Posterior vena cava (tissue), 2 donors: ENCODE measurements at regions of chr2 and their contacts with region 1.

Region 1: GRCh38 chr2:207769597-207770486 is at the start of gene FZD5:
- DNase-seq: peak; percentile 98
- total RNA-seq, gene FZD5: 3.4 to 3.7 TPM

Region 2: DNA sequence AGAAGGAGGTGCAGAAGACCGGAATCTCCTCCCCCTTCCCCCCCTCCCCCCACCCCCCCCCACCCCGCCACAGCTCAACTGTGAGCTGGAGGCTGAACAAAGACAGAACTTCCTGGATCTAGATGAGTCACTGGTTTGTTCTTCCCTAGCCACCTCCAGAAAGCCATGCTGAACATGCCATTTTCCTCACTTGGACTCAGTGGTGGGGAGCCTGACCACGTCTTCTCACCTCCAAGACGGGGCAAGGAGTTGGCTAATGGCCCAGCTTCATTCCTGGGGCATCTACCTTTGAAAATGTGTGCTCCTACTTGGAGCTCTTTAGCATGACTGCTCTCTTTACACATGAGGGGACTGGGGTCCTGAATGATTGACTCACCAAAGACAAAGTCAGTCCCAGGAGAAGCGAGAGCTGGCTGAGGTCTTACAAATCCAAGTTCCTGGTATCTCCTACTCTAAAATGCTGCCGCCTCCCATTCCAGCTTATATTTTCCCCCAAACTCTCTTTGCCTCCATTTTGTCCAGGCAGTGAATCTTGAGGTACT is 22.5 kb after region 1 on chr2:
- intact Hi-C with region 1: no loop called
- DNase-seq: no peak

Region 3: DNA sequence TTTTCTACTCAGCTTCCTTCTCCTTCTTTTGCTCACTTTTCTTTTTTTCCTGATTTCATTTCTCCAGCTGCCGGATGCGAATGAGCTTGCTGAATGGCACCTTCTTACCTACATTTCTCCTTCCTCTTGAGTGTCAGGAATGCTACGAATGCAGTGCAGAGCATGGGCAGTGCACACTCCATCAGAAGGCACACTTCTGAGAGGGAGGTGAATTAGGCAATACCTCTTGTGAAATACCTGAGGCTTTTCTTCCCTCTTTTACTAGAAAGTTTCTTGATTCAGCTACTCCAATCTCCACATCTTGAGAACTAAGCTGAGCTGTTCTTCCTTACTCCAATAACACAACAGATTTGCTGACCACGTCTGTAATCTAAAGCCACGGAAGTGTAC is 204.4 kb after region 1 on chr2:
- intact Hi-C with region 1: loop called in 1 of 2 experiments (anchors 10 kb)
- DNase-seq: no peak

Region 4: GRCh38 chr2:208025037-208025813 is 255.4 kb after region 1 on chr2 and contains the start of gene PLEKHM3:
- intact Hi-C with region 1: loop called in 1 of 2 experiments (anchors 10 kb)
- DNase-seq: peak; percentile 96
- total RNA-seq, gene PLEKHM3: 8.9 to 9.8 TPM